GM12878 (cell line): ENCODE measurements at regions of chr7 and their contacts with region 1.

Region 1: GRCh38 chr7:15015545-15016326 is 113.2 kb upstream of the DGKB start:
- DNase-seq: peak; percentile 5
- ATAC-seq: peak; percentile 97
- H3K4me3 ChIP-seq: no peak overlapping the region
- H3K27ac ChIP-seq: no peak overlapping the region
- H3K4me1 ChIP-seq: no peaks in the 10 kb centered on the region
- H3K27me3 ChIP-seq: no peaks in the 10 kb centered on the region
- CTCF ChIP-seq: peak; percentile 54 to 57 (median 54); a peak in 5 of 6 replicates
- EP300 ChIP-seq: no peak
- POLR2A ChIP-seq: no peak
- RAD21 ChIP-seq: peak; percentile 56

Region 2: GRCh38 chr7:14698239-14698638 is 317.5 kb before region 1 on chr7:
- CTCF ChIA-PET with region 1: interaction called, 15 read pairs
- POLR2A ChIA-PET with region 1: no interaction called
- RAD21 ChIA-PET with region 1: interaction called, 16 read pairs
- SMC1A ChIA-PET with region 1: interaction called, 17 read pairs
- in situ Hi-C with region 1: no loop called
- intact Hi-C with region 1: loop called (anchors 1 kb)
- DNase-seq: no peak
- ATAC-seq: peak; percentile 58; the same call in 2 of the 3 replicates
- H3K4me3 ChIP-seq: no peak overlapping the region
- H3K27ac ChIP-seq: no peak overlapping the region
- H3K4me1 ChIP-seq: no peaks in the 10 kb centered on the region
- H3K27me3 ChIP-seq: no peaks in the 10 kb centered on the region
- CTCF ChIP-seq: no peak; a peak in 1 of 6 replicates
- EP300 ChIP-seq: no peak
- POLR2A ChIP-seq: no peak
- RAD21 ChIP-seq: peak; percentile 22; the same call in 1 of the 2 replicates

Region 3: DNA sequence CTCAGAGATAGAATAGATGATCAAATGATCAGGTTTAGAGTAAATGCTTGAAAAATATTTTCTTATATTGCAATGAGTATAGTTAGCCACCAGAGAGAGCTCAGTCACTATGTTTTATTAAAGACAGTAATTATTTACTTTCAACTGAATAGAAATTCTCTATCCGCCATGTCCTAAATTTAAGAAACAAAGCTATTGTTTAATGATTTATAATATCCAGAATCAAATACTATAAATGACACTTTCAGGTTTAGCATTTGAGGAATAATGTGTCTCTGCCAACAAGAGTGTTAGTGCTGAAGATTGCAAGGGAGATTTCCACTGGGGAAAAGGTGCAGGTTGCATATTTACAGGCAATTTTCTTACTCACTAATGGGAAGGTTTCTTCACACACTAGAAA is 297.9 kb before region 1 on chr7:
- CTCF ChIA-PET with region 1: interaction called, 137 read pairs
- POLR2A ChIA-PET with region 1: no interaction called
- RAD21 ChIA-PET with region 1: interaction called, 38 read pairs
- SMC1A ChIA-PET with region 1: interaction called, 109 read pairs
- in situ Hi-C with region 1: loop called (anchors 5 kb)
- intact Hi-C with region 1: loop called (anchors 1 kb)
- DNase-seq: no peak
- ATAC-seq: no peak
- H3K4me3 ChIP-seq: no peak overlapping the region
- H3K27ac ChIP-seq: no peak overlapping the region
- H3K4me1 ChIP-seq: no peaks in the 10 kb centered on the region
- H3K27me3 ChIP-seq: peaks cover 0 to 3% of the 10 kb centered on the region in 2 experiments; a peak in 1 of 4 replicates
- CTCF ChIP-seq: peak in 2 of 3 experiments; percentile 7 to 12; a peak in 3 of 6 replicates
- EP300 ChIP-seq: no peak
- POLR2A ChIP-seq: no peak
- RAD21 ChIP-seq: peak; percentile 49

Region 4: GRCh38 chr7:15033039-15033438 is 17.3 kb after region 1 on chr7:
- CTCF ChIA-PET with region 1: interaction called, 23 read pairs
- POLR2A ChIA-PET with region 1: no interaction called
- RAD21 ChIA-PET with region 1: interaction called, 3 read pairs
- SMC1A ChIA-PET with region 1: interaction called, 6 read pairs
- in situ Hi-C with region 1: no loop called
- intact Hi-C with region 1: no loop called
- DNase-seq: no peak
- ATAC-seq: no peak
- H3K4me3 ChIP-seq: no peak overlapping the region
- H3K27ac ChIP-seq: no peak overlapping the region
- H3K4me1 ChIP-seq: no peaks in the 10 kb centered on the region
- H3K27me3 ChIP-seq: no peaks in the 10 kb centered on the region
- CTCF ChIP-seq: no peak
- EP300 ChIP-seq: no peak
- POLR2A ChIP-seq: no peak
- RAD21 ChIP-seq: no peak

Region 5: DNA sequence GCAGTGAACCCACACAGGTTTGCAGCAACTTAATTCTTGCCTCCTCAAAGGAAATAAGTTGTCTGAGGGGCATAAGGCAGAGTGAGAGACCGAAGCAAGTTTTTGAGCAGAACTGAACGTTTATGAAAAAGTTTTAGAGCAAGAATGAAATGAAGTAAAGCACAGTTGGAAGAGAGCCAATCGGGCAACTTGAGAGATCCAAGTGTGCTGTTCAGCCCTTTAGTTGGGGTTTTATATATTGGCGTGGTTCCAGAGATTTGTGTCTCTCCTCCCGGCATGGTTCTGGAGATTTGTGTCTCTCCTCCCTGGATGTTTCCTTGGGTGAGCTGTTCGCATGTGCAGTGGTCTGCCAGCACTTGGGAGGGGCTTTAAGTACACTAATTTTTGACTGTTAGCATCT is 28.2 kb after region 1 on chr7:
- CTCF ChIA-PET with region 1: no interaction called
- POLR2A ChIA-PET with region 1: no interaction called
- RAD21 ChIA-PET with region 1: no interaction called
- SMC1A ChIA-PET with region 1: no interaction called
- in situ Hi-C with region 1: no loop called
- intact Hi-C with region 1: no loop called
- DNase-seq: no peak
- ATAC-seq: no peak
- H3K4me3 ChIP-seq: no peak overlapping the region
- H3K27ac ChIP-seq: no peak overlapping the region
- H3K4me1 ChIP-seq: no peaks in the 10 kb centered on the region
- H3K27me3 ChIP-seq: no peaks in the 10 kb centered on the region
- CTCF ChIP-seq: no peak
- EP300 ChIP-seq: no peak
- POLR2A ChIP-seq: no peak
- RAD21 ChIP-seq: no peak

Region 6: GRCh38 chr7:15345216-15345615 is 329.5 kb after region 1 on chr7:
- CTCF ChIA-PET with region 1: no interaction called
- POLR2A ChIA-PET with region 1: no interaction called
- RAD21 ChIA-PET with region 1: no interaction called
- SMC1A ChIA-PET with region 1: no interaction called
- in situ Hi-C with region 1: no loop called
- intact Hi-C with region 1: no loop called
- DNase-seq: no peak
- ATAC-seq: no peak
- H3K4me3 ChIP-seq: no peak overlapping the region
- H3K27ac ChIP-seq: no peak overlapping the region
- H3K4me1 ChIP-seq: no peaks in the 10 kb centered on the region
- H3K27me3 ChIP-seq: no peaks in the 10 kb centered on the region
- CTCF ChIP-seq: no peak
- EP300 ChIP-seq: no peak
- POLR2A ChIP-seq: no peak
- RAD21 ChIP-seq: no peak

Region 7: GRCh38 chr7:15737601-15738000 is 721.9 kb after region 1 on chr7:
- CTCF ChIA-PET with region 1: no interaction called
- POLR2A ChIA-PET with region 1: no interaction called
- RAD21 ChIA-PET with region 1: no interaction called
- SMC1A ChIA-PET with region 1: no interaction called
- in situ Hi-C with region 1: no loop called
- intact Hi-C with region 1: no loop called
- DNase-seq: no peak
- ATAC-seq: no peak
- H3K4me3 ChIP-seq: no peak overlapping the region
- H3K27ac ChIP-seq: no peak overlapping the region
- H3K4me1 ChIP-seq: no peaks in the 10 kb centered on the region
- H3K27me3 ChIP-seq: no peaks in the 10 kb centered on the region
- CTCF ChIP-seq: no peak
- EP300 ChIP-seq: no peak
- POLR2A ChIP-seq: no peak
- RAD21 ChIP-seq: no peak